Activated CD4-positive, alpha-beta memory T cell treated with anti-CD3 and anti-CD28 coated beads for 36 hours (primary cell): ENCODE measurements at regions of chr3 and their contacts with region 1.

Region 1: GRCh38 chr3:156483961-156484787 is 70.7 kb downstream of the SSR3 start:
- DNase-seq: peak; percentile 62
- H3K4me3 Mint-ChIP-seq: peak overlapping the region; percentile 66
- H3K27ac Mint-ChIP-seq: peak overlapping the region; percentile 90
- H3K4me1 Mint-ChIP-seq: peaks cover 41% of the 10 kb centered on the region
- H3K27me3 Mint-ChIP-seq: no peaks in the 10 kb centered on the region

Region 2: DNA sequence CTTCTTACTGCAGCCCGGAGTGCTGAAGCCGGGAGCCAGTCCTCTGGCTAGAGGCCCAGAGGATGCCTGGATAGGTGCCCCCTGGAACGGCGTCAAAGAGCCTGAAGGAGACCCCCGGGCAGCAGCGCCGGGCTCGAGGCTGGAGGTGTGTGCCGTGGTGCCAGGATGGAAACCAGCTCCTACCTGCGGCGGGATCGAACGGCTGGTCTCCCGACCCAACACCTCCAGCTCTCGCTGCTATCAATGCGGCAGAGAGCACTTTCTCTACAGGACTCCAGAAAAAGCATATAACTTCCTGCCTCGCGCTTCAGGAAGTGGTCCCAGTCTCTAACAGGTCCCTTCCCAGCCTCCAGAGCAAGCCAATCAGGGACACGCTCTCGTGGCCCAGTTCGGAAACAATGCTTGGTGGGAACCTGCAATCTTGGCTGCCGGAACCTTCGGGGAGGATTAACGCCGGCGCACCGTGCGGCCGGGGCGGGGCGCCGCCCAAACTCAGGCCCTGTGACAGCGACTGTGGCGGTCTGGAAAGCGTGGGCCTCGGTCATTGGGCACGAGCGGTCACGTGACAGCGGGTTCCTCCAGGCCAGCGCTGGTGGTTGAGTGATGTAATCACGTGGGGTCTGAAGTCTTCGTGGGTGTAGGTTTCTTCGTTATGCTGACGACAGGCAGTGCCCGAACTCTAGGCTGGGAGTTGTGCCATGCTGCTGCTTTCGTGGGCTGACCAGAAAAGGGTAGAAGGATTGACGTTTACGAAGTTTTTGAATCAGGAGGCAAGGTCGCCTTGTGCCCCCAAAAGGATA is 629.8 kb before region 1 on chr3 and contains the start of gene SLC33A1:
- CTCF ChIA-PET with region 1: no interaction called
- POLR2A ChIA-PET with region 1: no interaction called
- intact Hi-C with region 1: loop called (anchors 1 kb)
- DNase-seq: peak; percentile 99
- H3K4me3 Mint-ChIP-seq: peak within 1 kb of the TSS; percentile 97
- H3K27ac Mint-ChIP-seq: peak within 1 kb of the TSS; percentile 99
- H3K4me1 Mint-ChIP-seq: peaks cover 31% of the 10 kb centered on the region
- H3K27me3 Mint-ChIP-seq: no peaks in the 10 kb centered on the region
- total RNA-seq, gene SLC33A1: 20.5 to 23.6 TPM

Region 3: GRCh38 chr3:156497326-156497725 is 13.2 kb after region 1 on chr3:
- CTCF ChIA-PET with region 1: no interaction called
- POLR2A ChIA-PET with region 1: no interaction called
- intact Hi-C with region 1: no loop called
- DNase-seq: no peak
- H3K4me3 Mint-ChIP-seq: no peak overlapping the region
- H3K27ac Mint-ChIP-seq: no peak overlapping the region
- H3K4me1 Mint-ChIP-seq: no peaks in the 10 kb centered on the region
- H3K27me3 Mint-ChIP-seq: peaks cover 6% of the 10 kb centered on the region

Region 4: GRCh38 chr3:156519758-156520162 is 35.6 kb after region 1 on chr3:
- CTCF ChIA-PET with region 1: interaction called, 3 read pairs
- POLR2A ChIA-PET with region 1: no interaction called
- intact Hi-C with region 1: loop called (anchors 1 kb)
- DNase-seq: peak; percentile 41
- H3K4me3 Mint-ChIP-seq: no peak overlapping the region
- H3K27ac Mint-ChIP-seq: no peak overlapping the region
- H3K4me1 Mint-ChIP-seq: peaks cover 19% of the 10 kb centered on the region
- H3K27me3 Mint-ChIP-seq: peaks cover 9% of the 10 kb centered on the region

Region 5: DNA sequence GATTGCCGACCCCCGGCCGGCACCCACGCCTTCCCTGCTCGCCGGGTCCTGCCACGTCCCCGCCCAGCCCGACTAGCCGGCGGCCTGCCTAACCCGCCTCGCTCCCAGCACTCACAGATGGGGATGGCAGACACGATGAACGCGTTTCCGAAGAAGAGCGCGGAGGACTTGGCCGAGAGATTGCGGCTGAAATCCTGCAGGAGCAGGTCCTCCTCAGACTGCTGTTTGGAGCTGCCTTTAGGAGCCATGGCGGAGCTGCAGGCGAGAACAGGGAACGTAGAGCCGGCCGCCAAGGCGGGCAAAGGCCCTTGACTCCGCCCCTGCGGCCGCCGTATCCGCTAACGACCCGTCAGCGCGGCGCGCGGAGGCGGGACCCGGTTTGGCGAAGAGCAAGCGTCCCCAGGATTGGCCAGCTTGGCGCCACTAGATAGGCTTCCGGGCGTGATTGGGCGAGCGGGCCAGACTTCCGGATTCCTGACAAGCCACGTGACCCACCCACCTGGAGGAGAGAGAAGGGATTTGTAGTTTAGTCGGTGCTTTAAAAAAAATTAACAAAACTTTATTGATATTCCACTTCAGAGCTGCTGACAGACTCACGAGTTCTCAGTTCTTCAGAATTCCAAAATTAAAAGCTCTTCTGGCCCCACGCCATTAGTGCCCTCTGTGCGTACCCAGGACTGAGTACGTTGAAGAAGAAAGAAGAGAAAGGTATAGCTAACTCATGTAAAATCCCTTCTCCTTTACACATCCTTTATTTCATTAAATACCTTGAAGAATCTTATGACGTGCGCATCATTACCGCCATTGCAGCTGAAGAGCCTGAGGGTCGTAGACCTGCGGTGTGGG is 70.9 kb after region 1 on chr3 and contains the start of gene SSR3:
- CTCF ChIA-PET with region 1: no interaction called
- POLR2A ChIA-PET with region 1: interaction called, 4 read pairs
- intact Hi-C with region 1: loop called (anchors 1 kb)
- DNase-seq: peak; percentile 99
- H3K4me3 Mint-ChIP-seq: peak within 1 kb of the TSS; percentile 97
- H3K27ac Mint-ChIP-seq: peak within 1 kb of the TSS; percentile 88
- H3K4me1 Mint-ChIP-seq: peaks cover 46% of the 10 kb centered on the region
- H3K27me3 Mint-ChIP-seq: no peaks in the 10 kb centered on the region
- total RNA-seq, gene SSR3: 162 to 170 TPM

Region 6: DNA sequence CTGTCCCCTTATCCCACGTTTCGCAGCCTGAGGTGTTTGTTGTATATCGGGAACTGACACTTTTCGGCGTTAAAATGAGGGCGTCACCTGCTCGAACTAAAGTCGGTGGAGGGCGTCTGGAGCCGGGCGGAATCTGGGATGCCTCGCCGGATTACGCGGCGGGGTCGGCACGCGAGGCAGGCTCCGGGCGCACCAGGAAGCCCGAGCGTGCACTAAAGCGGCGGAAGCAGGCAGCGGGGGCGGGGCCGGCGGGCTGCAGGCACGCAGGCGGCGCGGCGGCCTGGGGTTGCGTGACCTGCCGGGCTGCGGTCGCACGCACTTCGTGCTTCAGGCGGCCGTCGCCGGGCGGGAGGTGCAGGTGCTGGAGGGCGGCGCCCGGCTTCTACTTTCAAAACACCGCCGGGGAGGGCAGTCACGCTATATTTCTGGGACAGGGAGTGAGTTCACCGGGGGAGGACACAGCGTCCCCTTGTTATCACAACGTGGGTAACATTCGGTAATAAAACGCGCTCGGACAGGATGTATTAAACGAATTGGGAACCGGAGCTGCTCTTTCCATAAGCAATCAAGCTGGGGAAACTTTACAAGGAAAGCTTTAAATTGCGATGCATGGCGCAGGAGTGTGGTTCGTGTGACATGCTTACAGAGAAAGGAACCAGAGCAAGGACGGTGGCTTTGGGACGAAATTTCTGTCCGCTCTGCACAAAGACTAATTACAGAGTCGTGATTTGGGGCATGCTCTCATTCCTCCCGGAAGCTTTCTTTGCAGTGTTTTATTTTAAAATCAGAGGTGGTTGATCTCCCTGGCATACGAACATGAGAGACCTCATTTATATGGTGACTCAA is 332.8 kb after region 1 on chr3:
- CTCF ChIA-PET with region 1: no interaction called
- POLR2A ChIA-PET with region 1: no interaction called
- intact Hi-C with region 1: loop called (anchors 2 kb)
- DNase-seq: peak; percentile 92
- H3K4me3 Mint-ChIP-seq: peak overlapping the region; percentile 85
- H3K27ac Mint-ChIP-seq: peak overlapping the region; percentile 90
- H3K4me1 Mint-ChIP-seq: peaks cover 43% of the 10 kb centered on the region
- H3K27me3 Mint-ChIP-seq: no peaks in the 10 kb centered on the region

Region 7: GRCh38 chr3:157088601-157089454 is 604.7 kb after region 1 on chr3:
- CTCF ChIA-PET with region 1: no interaction called
- POLR2A ChIA-PET with region 1: no interaction called
- intact Hi-C with region 1: loop called (anchors 1 kb)
- DNase-seq: peak; percentile 96
- H3K4me3 Mint-ChIP-seq: peak overlapping the region; percentile 72
- H3K27ac Mint-ChIP-seq: peak overlapping the region; percentile 96
- H3K4me1 Mint-ChIP-seq: peaks cover 64% of the 10 kb centered on the region
- H3K27me3 Mint-ChIP-seq: no peaks in the 10 kb centered on the region